ENCODE measurements at regions of chr2 and their contacts with region 1.

Region 1: GRCh38 chr2:239401067-239401880 is 454 bp upstream of the HDAC4 start:
- DNase-seq: peak; percentile 99
- ATAC-seq: peak; percentile 95 to 99 (median 97)
- H3K4me3 ChIP-seq: peak overlapping the region; percentile 52 to 88 (median 73)
- H3K27ac ChIP-seq: peak overlapping the region; percentile 95 to 100 (median 100)
- H3K4me1 ChIP-seq: peaks cover 0 to 42% (median 28%) of the 10 kb centered on the region in 9 donors
- H3K27me3 ChIP-seq: no peaks in the 10 kb centered on the region
- CTCF ChIP-seq: no peak

Region 2: DNA sequence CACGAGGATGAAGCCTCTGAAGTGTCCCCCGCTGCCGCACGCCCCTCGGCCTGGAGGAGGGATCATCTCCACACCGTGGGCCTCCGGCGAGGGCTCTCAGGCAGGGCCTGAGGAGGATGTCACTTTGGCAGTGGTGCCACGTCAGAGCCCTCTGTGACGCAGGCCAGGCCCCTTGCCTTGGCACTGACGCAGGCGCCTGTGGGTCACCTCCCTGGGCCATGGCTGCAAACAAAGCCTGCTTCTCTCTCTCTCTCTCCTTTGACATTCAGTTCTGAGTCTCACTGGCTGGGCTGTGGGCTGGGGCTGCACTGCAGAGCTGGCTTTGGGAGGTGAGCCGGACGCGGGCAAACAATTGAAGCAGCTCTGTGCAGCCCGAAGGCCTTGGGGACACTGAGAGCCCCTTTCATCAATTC is 279.7 kb before region 1 on chr2:
- intact Hi-C with region 1: loop called in 1 of 10 experiments (anchors 10 kb)
- DNase-seq: peak; percentile 36 to 46
- ATAC-seq: peak; percentile 30 to 84 (median 68)
- H3K4me3 ChIP-seq: no peak overlapping the region
- H3K27ac ChIP-seq: peak overlapping the region in 9 of 10 donors; percentile 33 to 81 (median 71)
- H3K4me1 ChIP-seq: peaks cover 0 to 20% (median 10%) of the 10 kb centered on the region in 9 donors
- H3K27me3 ChIP-seq: no peaks in the 10 kb centered on the region
- CTCF ChIP-seq: no peak

Region 3: DNA sequence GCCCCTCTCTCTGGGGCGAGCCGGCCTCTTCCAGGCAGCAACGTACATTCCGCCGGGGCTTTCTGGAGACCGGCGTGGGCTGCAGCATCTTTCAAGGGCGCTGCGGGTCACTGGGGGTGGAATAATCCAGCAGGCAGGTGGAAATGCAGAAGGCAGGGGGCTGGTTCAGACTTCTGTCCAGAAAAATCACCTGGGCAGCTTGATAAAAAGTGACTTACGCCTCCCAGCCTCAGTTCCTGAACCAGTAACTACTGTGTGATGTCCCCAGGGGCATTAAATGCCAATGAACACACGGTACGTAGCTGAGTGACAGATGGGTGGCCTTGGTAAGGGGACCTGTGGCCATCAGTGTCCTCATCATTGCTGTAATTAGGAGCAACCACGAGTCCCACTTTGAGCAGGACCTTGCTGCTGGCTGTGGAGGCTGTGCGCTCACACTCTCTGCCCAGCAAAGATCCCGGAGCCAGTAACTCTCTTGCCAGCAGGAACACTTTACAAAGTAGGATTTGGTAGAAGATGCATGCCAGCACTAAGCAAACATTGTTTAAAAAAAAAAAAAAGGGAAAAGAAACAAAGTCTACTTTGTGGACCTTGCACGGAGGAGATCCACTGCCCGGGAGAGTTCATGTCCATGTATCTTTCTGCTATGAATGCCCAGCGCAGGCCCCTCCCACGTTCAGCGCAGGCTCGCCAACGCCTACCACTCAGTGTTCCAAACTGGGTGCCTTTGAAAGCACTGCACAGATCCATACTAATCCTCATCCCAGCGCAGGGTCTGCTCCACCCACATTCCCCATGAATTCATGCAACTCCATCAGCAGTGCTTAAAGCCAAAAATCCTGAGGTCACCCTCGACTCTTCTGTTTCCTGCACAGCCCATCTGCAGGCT is 177.7 kb before region 1 on chr2:
- intact Hi-C with region 1: loop called in 2 of 10 experiments (anchors 5 to 10 kb)
- DNase-seq: peak in 1 of 2 donors; percentile 40
- ATAC-seq: peak in 6 of 8 donors; percentile 10 to 53 (median 25)
- H3K4me3 ChIP-seq: no peak overlapping the region
- H3K27ac ChIP-seq: peak overlapping the region in 9 of 10 donors; percentile 40 to 89 (median 86)
- H3K4me1 ChIP-seq: peaks cover 38 to 88% (median 76%) of the 10 kb centered on the region in 9 donors
- H3K27me3 ChIP-seq: no peaks in the 10 kb centered on the region
- CTCF ChIP-seq: no peak

Region 4: GRCh38 chr2:239267288-239267951 is 133.9 kb before region 1 on chr2:
- intact Hi-C with region 1: loop called in 1 of 10 experiments (anchors 5 kb)
- DNase-seq: peak; percentile 62 to 65
- ATAC-seq: peak; percentile 41 to 67 (median 58)
- H3K4me3 ChIP-seq: peak overlapping the region in 3 of 10 donors; percentile 9 to 58 (median 14)
- H3K27ac ChIP-seq: peak overlapping the region; percentile 6 to 96 (median 76)
- H3K4me1 ChIP-seq: peaks cover 43 to 91% (median 69%) of the 10 kb centered on the region in 9 donors
- H3K27me3 ChIP-seq: no peaks in the 10 kb centered on the region
- CTCF ChIP-seq: peak in 5 of 9 donors; percentile 33 to 51 (median 36)

Region 5: DNA sequence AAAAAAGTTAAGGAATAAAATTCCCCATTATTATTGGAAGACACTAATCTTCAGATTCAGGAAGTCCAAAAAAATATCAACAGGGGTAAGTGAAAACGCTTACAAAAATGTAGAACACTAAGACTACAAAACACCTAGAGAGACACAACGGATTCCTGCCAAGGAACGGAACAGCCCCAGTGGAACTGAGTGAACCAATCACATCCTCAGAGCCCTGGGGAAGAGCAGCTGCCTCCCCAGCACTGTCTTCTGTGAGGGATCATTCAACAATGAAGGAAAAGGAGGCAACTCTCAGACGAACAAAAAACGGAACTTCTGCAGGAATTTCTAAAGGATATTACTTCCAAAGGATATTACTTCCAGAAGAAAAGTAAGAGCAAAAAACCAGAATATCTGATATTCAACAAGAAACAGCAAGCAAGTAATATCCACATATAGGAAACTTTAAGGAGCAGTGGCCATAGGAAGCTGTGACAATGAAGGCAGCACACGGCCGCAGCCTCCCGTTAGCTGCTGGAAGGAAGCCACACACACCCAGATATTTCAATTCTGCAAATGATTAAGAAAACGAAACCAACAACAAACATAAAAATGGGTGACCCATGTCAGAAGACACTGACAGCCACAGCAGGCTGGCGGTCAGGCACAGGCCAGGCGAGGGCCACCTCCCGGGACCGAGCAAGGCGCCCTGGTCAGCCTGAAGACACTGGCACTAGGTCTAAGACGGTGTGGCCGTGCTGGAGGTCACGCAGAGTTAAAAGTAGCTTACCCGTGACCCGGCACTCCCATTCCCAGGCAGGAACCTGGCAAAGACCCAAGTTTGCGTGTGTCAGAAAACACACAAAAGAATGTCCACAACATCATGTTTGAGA is 82.2 kb before region 1 on chr2:
- intact Hi-C with region 1: loop called in 6 of 10 experiments (anchors 5 kb)
- DNase-seq: peak in 1 of 2 donors; percentile 45
- ATAC-seq: peak in 7 of 8 donors; percentile 20 to 71 (median 57)
- H3K4me3 ChIP-seq: peak overlapping the region in 9 of 10 donors; percentile 4 to 46 (median 43)
- H3K27ac ChIP-seq: peak overlapping the region; percentile 16 to 88 (median 80)
- H3K4me1 ChIP-seq: peaks cover 11 to 61% (median 47%) of the 10 kb centered on the region in 9 donors
- H3K27me3 ChIP-seq: no peaks in the 10 kb centered on the region
- CTCF ChIP-seq: no peak

Region 6: DNA sequence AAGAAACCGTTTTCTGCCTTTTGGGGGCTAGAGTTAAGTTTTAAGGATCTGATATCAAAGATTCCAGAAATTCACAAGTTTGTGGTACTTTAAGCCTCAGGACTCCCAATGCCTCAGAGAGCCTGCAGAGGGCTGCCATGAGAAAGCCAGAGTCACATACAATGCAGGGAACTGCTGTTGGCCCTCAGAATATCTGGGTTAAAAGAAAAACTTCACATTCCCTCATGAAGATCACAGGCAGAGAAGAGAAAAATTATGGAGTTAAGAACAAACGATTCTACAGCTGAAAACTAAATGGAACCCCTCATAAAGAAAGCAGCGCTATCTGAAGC is 40.0 kb before region 1 on chr2:
- intact Hi-C with region 1: no loop called
- DNase-seq: no peak
- ATAC-seq: no peak
- H3K4me3 ChIP-seq: no peak overlapping the region
- H3K27ac ChIP-seq: no peak overlapping the region
- H3K4me1 ChIP-seq: peaks cover 2 to 39% (median 13%) of the 10 kb centered on the region in 9 donors
- H3K27me3 ChIP-seq: no peaks in the 10 kb centered on the region
- CTCF ChIP-seq: peak in 3 of 9 donors; percentile 34 to 42 (median 36)

Region 7: GRCh38 chr2:239605976-239606375 is 204.7 kb after region 1 on chr2:
- intact Hi-C with region 1: no loop called
- DNase-seq: no peak
- ATAC-seq: no peak
- H3K4me3 ChIP-seq: no peak overlapping the region
- H3K27ac ChIP-seq: no peak overlapping the region
- H3K4me1 ChIP-seq: peaks cover 0 to 33% (median 0%) of the 10 kb centered on the region in 9 donors
- H3K27me3 ChIP-seq: peaks cover 0 to 68% (median 51%) of the 10 kb centered on the region in 7 donors
- CTCF ChIP-seq: no peak

Measured in heart right ventricle (tissue), 16 donors.